ENCODE measurements at regions of chr10 and their contacts with region 1.

Region 1: DNA sequence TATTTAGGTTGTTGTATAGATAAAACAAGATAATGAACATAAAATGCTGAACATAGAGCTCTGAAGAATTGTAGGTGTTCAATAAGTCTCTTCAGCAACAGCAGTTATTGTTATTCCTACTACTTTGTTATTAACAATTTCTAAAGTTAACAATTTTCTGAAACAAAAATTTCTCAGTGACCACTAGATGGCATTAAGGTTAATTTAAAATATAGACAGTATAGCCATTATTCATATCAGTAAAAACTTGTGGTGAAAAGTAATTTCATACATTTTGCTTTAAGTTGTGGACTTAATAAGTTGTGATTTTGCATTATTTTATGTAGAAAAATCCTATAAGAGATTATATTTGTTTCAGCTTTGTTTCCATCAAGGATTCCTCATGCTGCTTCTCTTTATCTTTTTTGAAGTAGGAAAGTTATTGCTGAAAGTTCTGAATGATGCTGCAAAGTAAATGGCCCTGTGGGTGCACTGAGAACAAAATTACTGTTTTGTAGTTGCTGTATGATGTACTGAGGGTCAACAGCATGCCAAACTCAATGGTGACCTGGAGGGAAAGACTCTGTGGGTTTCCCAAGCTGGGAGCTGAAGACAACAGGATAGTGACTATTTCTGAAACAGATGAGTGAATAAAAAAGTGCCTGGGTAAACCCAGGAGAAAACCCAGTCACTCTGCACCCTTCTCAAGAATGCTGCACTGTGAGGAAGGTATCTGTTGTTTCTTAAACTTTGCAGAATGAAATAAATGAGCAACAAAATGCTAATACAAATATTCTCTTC is 253.6 kb downstream of the KIF20B start:
- DNase-seq: no peak
- ATAC-seq: no peak
- H3K4me3 ChIP-seq: no peak overlapping the region
- H3K27ac ChIP-seq: no peak overlapping the region
- H3K4me1 ChIP-seq: no peaks in the 10 kb centered on the region
- H3K27me3 ChIP-seq: no peaks in the 10 kb centered on the region
- CTCF ChIP-seq: peak in 10 of 12 donors; percentile 9 to 47 (median 27)
- POLR2A ChIP-seq: no peak

Region 2: DNA sequence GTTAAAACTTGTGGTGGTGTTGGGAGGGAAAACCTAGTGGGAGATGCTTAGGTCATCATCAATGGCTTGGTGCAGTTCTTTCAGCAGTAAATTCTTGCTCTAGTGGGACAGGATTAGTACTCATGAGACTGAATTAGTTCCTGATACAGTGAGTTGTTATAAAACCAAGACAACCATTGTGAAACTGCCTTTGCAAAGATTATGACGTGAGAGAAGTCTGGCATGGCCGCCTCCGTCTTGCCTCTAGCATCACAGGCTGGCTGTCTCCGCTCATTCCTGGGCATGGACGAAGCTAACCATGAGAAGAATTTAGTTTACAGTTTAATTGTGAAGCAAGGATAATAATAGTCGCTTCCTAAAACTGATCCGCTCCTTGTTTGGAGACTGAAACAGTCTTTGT is 67.1 kb before region 1 on chr10:
- intact Hi-C with region 1: no loop called
- DNase-seq: peak in 1 of 5 donors; percentile 32
- ATAC-seq: peak in 1 of 4 donors; percentile 65
- H3K4me3 ChIP-seq: no peak overlapping the region
- H3K27ac ChIP-seq: peak overlapping the region in 4 of 12 donors; percentile 3 to 59 (median 32)
- H3K4me1 ChIP-seq: peaks cover 0 to 20% (median 0%) of the 10 kb centered on the region in 12 donors
- H3K27me3 ChIP-seq: peaks cover 0 to 7% (median 0%) of the 10 kb centered on the region in 9 donors
- CTCF ChIP-seq: no peak
- POLR2A ChIP-seq: no peak

Region 3: GRCh38 chr10:89973326-89973725 is 18.3 kb after region 1 on chr10:
- intact Hi-C with region 1: no loop called
- DNase-seq: no peak
- ATAC-seq: no peak
- H3K4me3 ChIP-seq: no peak overlapping the region
- H3K27ac ChIP-seq: no peak overlapping the region
- H3K4me1 ChIP-seq: no peaks in the 10 kb centered on the region
- H3K27me3 ChIP-seq: no peaks in the 10 kb centered on the region
- CTCF ChIP-seq: no peak
- POLR2A ChIP-seq: no peak

Region 4: DNA sequence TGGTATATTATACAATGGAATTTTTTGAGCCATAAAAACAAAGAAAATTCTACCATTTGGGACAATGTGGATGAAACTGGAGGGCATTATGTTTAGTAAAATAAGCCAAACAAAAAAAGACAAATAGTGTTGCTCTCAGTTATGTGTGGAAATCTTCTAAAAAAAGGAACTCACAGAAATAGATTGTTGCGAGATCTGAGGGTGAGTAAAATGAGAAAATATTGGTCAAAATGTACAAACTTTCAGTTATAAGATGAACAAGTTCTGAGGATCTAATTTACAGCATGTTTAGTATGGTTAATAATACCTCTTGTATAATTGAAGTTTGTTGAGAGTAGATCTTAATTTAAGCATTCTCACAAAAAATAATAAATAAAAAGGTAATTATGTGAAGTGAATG is 37.6 kb after region 1 on chr10:
- intact Hi-C with region 1: no loop called
- DNase-seq: no peak
- ATAC-seq: no peak
- H3K4me3 ChIP-seq: no peak overlapping the region
- H3K27ac ChIP-seq: no peak overlapping the region
- H3K4me1 ChIP-seq: no peaks in the 10 kb centered on the region
- H3K27me3 ChIP-seq: no peaks in the 10 kb centered on the region
- CTCF ChIP-seq: no peak
- POLR2A ChIP-seq: no peak

Region 5: GRCh38 chr10:90592638-90593302 is 637.8 kb after region 1 on chr10:
- intact Hi-C with region 1: loop called in 1 of 10 experiments (anchors 10 kb)
- DNase-seq: peak in 3 of 5 donors; percentile 20 to 36 (median 27)
- ATAC-seq: peak in 3 of 4 donors; percentile 41 to 60 (median 52)
- H3K4me3 ChIP-seq: no peak overlapping the region
- H3K27ac ChIP-seq: no peak overlapping the region
- H3K4me1 ChIP-seq: peaks cover 0 to 12% (median 0%) of the 10 kb centered on the region in 12 donors
- H3K27me3 ChIP-seq: no peaks in the 10 kb centered on the region
- CTCF ChIP-seq: peak in 8 of 12 donors; percentile 8 to 47 (median 28)
- POLR2A ChIP-seq: no peak

Region 6: DNA sequence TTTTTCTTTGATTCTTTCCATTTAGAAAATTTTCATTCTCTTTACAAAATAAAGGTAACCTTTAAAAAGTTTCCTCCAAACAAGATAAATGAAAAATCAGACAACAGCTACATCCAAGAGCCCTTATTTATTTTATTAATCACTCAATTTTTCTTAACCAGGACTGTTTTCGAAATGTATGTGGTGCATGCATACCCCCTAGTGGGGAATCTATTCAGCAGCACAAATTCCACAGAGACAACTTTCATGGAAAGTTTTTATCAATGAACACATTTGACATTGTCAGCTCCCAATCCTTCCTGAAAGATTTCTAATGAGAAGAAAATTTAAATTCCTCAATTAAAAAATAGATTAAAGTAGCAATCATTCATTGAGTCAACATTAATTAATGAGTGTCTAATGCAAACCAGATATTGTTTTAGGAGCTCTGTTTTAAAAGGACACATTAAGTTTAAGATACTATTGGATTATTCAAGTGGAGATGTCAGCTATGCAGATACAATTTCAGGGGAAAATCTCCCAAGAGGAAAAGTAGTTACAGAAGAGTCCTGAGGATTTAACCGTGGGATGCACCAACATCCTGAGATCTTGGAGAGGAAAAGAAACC is 908.0 kb after region 1 on chr10:
- intact Hi-C with region 1: loop called in 1 of 10 experiments (anchors 10 kb)
- DNase-seq: no peak
- ATAC-seq: no peak
- H3K4me3 ChIP-seq: no peak overlapping the region
- H3K27ac ChIP-seq: no peak overlapping the region
- H3K4me1 ChIP-seq: peaks cover 0 to 12% (median 0%) of the 10 kb centered on the region in 12 donors
- H3K27me3 ChIP-seq: peaks cover 0 to 12% (median 0%) of the 10 kb centered on the region in 9 donors
- CTCF ChIP-seq: peak; percentile 36 to 67 (median 56)
- POLR2A ChIP-seq: no peak

Measured in heart left ventricle (tissue), 16 donors.